Right cardiac atrium (tissue), 5 donors: ENCODE measurements at regions of chr9 and their contacts with region 1.

Region 1: DNA sequence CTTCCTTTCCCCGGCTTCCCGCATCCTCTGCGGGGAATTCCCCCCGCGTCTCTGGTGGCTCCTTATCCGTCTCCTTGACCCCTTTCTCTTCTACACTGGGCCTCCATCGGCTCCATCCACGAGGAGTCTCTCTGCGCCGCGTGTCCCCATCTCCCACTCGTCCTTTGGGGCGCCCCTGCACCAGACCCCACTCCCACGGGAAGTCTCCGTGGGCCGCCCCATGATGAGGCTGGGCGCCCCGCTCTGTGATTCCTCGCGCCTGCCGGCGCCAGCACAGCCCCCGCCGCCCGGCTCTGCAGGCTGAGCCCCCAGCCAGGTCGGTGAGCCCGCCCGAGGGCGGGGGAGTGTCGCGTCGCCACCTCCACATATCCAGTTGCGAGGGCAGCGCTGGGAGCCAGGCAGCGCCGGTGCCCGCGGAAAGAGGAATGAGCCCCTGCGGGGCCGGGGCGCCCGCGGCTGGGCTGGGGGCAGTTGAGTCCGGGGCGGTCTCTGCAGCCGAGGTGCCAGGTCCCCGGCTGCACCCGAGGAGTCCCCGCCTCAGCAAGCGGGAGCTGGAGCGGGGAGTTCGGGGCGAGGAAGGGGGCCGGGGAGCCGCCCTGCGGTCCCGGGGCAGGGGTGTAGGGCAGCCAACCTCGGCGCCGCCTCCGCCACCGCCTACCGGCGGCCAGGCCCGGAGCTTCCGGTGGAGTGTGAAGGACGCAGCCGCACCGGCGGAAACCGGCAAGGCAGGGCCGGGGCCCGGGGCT is 2.1 kb upstream of the TRAF1 start:
- DNase-seq: peak; percentile 83 to 92 (median 92)
- ATAC-seq: peak; percentile 89 to 91
- H3K4me3 ChIP-seq: peak overlapping the region; percentile 87
- H3K27ac ChIP-seq: peak overlapping the region; percentile 80
- H3K4me1 ChIP-seq: peaks cover 11% of the 10 kb centered on the region
- H3K27me3 ChIP-seq: no peaks in the 10 kb centered on the region

Region 2: GRCh38 chr9:120875954-120876841 is 52.5 kb before region 1 on chr9:
- intact Hi-C with region 1: loop called in 1 of 4 experiments (anchors 5 kb)
- DNase-seq: peak; percentile 88 to 94 (median 92)
- ATAC-seq: peak; percentile 84 to 89
- H3K4me3 ChIP-seq: peak overlapping the region; percentile 94
- H3K27ac ChIP-seq: peak overlapping the region; percentile 58
- H3K4me1 ChIP-seq: peaks cover 3% of the 10 kb centered on the region
- H3K27me3 ChIP-seq: no peaks in the 10 kb centered on the region